Head of caudate nucleus (tissue), 42 donors: ENCODE measurements at regions of chr12 and their contacts with region 1.

Region 1: GRCh38 chr12:118714051-118714460 is 267.3 kb upstream of the SRRM4 start:
- DNase-seq: peak in 39 of 42 donors; percentile 5 to 87 (median 59)

Region 2: DNA sequence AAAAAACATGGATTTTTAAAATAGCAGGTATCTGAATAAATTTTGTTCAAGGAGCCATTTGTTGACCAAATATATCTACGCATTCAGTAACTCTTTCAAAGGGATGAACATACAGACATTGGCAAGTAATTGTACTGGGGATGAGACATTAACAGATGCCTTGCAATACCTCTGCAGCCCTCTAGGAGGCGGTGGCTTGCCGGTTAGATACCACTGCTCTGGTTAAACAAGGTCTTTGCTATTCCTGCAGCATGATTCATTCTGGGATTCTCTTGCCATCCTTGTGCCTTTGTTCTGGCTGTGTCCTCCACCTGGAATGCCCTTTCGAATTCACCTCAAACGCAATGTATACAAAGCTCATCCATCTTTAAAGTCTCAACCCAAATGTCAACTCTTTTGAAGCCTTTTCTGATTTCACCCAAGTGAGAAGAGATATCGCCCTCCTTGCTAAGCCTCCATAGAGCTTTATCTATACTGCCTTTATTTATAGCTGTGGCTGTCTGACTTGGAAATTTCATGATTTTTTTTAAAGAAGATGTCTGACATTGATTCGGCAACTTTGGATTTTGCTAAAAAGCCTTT is 136.3 kb after region 1 on chr12:
- intact Hi-C with region 1: loop called (anchors 10 kb)
- DNase-seq: peak in 11 of 42 donors; percentile 4 to 46 (median 25)